ENCODE measurements at regions of chr3 and their contacts with region 1.

Region 1: DNA sequence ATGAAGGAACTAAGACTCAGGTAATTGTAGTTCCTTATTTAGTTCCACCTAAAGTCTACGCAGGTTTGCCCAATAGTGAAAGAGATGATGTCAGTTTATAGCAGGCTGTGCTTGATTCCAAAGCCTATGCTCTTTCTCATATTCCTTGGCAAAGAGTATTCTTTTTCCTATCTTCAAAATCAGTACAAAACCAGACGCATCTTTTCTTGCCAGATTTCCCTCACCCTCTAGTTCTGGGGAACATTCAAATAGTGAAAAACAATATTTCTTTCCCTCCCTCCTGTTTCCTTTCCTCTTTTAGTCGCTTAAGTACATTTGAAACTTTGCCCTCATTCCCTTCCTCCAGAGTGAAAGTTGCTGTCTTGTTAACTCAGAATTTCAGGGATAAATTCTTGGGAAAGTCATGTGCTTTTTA is 134.6 kb upstream of the PDZRN3 start:
- DNase-seq: no peak
- ATAC-seq: peak; percentile 64

Region 2: DNA sequence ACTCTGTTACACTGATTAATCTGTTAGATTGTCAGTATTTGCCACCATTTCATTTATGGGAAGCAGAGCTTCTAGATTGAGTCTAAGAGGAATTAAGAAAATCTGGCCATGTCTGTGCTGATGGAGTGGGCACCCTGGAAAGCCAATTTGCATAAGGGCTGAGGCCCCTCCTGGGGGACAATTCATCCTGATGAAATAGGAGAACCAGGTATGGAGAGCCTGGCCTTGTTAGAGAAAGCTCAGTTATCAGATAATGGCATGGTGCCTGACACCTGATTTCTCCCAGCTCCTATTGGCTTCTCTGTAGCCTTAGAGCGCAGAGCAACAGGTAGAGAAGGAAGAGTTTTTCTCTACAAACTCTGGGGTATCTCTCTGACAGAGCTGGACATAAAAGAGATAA is 583.6 kb before region 1 on chr3:
- intact Hi-C with region 1: no loop called
- DNase-seq: no peak
- ATAC-seq: no peak

Region 3: DNA sequence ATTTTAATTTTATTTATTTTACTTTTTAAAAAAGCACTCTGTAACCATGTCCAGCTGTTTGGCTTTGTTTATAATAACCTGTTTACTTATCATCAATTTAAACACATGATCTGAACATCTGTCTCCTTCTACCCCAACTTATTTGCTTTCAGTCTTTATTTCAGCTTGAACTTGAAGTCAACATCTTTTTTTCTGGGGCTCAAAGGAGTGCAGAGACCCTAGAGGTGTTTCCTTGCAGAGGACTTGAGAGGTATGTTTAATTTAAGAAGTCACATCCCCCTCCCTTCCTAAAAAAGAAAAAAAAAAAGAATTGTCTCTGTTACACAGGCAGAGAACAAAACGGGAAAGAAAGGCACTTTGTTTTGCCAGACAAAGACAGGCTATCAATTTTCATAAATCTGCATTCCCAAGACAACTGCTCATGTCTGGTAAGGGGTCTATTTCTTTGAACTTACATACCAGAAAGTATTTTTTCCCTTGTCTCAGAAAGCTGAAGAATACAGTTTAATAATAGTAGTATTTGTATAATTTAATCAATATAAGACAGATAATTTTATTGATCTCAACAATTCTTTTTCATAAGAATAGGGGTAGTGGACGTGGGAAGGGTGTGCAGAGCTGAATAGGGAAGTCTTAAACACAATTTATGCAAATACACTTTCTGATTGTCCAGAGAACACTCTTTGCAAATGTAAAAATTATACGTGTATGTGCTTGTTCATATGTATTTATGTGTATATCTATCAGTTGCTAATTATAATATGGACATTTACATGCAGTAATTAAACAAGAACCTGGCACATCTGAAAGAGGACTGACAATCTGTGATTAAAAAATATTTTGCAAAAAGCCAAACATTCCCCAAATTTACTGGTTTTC is 24.9 kb before region 1 on chr3:
- intact Hi-C with region 1: loop called (anchors 1 kb)
- DNase-seq: no peak
- ATAC-seq: no peak